ENCODE measurements at regions of chr2 and their contacts with region 1.

Region 1: GRCh38 chr2:65991381-65992197 is 443.3 kb upstream of the MEIS1 start:
- DNase-seq: no peak
- ATAC-seq: peak; percentile 92

Region 2: GRCh38 chr2:65081232-65081685 is 910.3 kb before region 1 on chr2:
- intact Hi-C with region 1: no loop called
- DNase-seq: no peak
- ATAC-seq: peak; percentile 71

Region 3: GRCh38 chr2:65778137-65778536 is 213.5 kb before region 1 on chr2:
- intact Hi-C with region 1: no loop called
- DNase-seq: no peak
- ATAC-seq: no peak

Region 4: GRCh38 chr2:65974067-65974723 is 17.4 kb before region 1 on chr2:
- intact Hi-C with region 1: no loop called
- DNase-seq: no peak
- ATAC-seq: no peak

Region 5: DNA sequence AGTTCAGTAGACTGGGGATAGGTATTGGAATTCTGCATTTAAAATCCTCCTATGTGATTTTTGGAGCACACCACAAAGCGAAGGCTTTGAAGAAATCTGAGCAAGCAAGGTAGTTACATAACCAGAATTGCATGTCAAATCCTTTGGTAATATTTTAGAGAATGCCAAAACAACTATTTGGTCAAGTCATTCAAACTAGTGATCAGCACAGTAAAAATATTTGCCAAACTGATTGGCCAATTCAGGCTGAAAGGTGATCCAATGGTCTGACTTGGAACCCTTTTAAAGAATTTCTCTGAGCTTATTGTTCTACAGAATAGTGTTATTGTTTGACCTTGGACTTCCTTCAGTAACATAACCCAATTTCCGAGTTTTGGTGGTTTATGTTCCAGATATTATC is 1191.3 kb after region 1 on chr2:
- intact Hi-C with region 1: loop called (anchors 5 kb)
- DNase-seq: no peak
- ATAC-seq: no peak

Measured in sciatic nerve (tissue), 2 donors.